ENCODE measurements at regions of chr14 and their contacts with region 1.

Region 1: DNA sequence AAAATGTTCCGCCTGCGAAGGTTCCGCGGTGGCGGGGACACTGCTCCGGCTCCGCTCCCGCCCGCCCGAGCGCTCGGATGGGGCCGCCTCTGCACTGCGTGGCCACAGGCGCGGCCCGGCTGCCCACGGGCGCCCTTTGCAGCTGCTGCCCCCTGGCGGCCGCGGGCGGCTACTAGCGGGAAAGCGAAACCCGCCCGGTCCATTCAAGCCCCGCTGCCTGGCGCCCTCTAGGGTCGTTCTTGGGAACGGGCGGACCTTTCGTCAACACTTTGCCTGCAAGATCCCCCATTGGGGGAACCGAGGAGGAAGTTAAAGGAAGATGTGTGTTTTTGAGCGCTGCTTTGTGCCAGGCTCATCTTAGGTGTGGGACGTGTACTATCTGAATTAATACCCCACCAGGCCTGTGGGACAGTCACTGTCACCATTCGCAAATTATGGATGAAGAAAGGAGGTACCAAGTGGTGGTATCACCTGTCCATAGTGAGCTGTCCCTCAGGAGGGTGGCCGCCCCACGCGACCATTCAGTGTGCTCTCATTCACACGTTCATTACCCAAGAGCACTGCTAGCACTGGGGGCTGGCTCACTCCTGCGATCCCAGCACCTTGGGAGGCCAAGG is 19.4 kb downstream of the GPR132 start:
- DNase-seq: no peak
- ATAC-seq: peak; percentile 92
- H3K4me3 ChIP-seq: peak overlapping the region in 1 of 2 experiments; percentile 33; a peak in 1 of 4 replicates
- H3K27ac ChIP-seq: no peak overlapping the region
- H3K4me1 ChIP-seq: peaks cover 5% of the 10 kb centered on the region; the same call in 1 of the 2 replicates
- H3K27me3 ChIP-seq: no peaks in the 10 kb centered on the region
- CTCF ChIP-seq: peak; percentile 99

Region 2: DNA sequence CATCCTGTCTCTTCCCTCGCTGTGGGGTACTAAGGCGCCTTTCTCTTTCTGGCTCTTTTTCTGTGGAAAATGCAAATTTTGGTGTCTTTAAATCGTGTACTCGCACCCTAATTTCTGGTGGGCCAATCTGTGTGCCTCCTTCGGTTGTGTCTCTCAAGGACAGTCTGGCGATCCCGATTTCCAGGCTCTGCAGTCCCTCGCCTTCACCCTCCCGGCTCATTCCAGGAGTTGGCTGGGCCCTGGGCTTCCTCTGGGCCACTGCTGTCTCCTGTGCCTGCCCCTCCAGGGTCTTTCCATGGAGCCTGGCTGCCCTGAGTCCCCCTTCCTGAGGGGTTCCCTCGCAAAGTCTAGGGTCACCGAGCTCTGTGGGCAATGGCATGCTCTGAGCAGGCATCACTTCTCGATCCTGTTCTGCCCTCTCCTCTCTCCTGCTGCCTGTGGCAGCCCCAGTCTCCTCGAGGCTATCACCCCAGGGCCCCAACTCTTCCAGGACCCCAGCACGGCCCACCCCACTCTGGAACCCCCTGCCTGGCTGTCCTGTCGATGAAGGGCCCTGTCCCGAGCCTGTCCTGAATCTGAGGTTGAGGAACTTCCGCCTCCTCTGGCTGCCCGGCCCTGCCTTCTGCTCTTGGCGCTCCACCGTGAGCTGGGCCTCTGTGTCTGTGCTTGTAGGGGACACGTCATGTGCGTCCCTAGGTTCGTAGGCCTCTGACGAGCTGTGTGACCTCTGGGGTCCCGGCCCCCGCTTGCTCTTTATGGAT is 91.7 kb before region 1 on chr14:
- CTCF ChIA-PET with region 1: no interaction called
- POLR2A ChIA-PET with region 1: no interaction called
- in situ Hi-C with region 1: no loop called
- intact Hi-C with region 1: no loop called
- DNase-seq: no peak
- ATAC-seq: no peak
- H3K4me3 ChIP-seq: no peak overlapping the region
- H3K27ac ChIP-seq: no peak overlapping the region
- H3K4me1 ChIP-seq: no peaks in the 10 kb centered on the region
- H3K27me3 ChIP-seq: no peaks in the 10 kb centered on the region
- CTCF ChIP-seq: no peak

Region 3: DNA sequence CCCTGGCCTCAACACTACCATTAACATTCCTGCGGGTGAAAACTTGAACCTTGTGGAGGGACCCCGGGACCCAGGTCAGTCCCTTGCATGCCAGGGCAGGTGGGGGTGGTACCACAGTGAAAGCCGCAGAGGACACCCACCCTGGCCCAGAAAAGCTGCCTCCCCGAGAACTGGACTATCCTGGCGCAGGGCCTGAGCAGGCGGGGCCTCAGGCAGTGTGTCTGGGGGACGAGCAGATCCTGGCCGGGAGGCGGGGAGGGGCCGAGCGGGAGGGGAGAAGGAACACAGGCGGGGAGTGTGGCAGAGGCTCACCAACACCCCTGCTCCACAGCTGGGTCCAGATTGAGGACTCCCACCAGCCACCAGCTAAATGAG is 77.7 kb before region 1 on chr14:
- CTCF ChIA-PET with region 1: interaction called, 12 read pairs
- POLR2A ChIA-PET with region 1: no interaction called
- in situ Hi-C with region 1: no loop called
- intact Hi-C with region 1: loop called (anchors 5 kb)
- DNase-seq: no peak
- ATAC-seq: peak; percentile 46
- H3K4me3 ChIP-seq: peak overlapping the region; percentile 65 to 77
- H3K27ac ChIP-seq: peak overlapping the region; percentile 93
- H3K4me1 ChIP-seq: peaks cover 50% of the 10 kb centered on the region
- H3K27me3 ChIP-seq: no peaks in the 10 kb centered on the region
- CTCF ChIP-seq: no peak

Region 4: DNA sequence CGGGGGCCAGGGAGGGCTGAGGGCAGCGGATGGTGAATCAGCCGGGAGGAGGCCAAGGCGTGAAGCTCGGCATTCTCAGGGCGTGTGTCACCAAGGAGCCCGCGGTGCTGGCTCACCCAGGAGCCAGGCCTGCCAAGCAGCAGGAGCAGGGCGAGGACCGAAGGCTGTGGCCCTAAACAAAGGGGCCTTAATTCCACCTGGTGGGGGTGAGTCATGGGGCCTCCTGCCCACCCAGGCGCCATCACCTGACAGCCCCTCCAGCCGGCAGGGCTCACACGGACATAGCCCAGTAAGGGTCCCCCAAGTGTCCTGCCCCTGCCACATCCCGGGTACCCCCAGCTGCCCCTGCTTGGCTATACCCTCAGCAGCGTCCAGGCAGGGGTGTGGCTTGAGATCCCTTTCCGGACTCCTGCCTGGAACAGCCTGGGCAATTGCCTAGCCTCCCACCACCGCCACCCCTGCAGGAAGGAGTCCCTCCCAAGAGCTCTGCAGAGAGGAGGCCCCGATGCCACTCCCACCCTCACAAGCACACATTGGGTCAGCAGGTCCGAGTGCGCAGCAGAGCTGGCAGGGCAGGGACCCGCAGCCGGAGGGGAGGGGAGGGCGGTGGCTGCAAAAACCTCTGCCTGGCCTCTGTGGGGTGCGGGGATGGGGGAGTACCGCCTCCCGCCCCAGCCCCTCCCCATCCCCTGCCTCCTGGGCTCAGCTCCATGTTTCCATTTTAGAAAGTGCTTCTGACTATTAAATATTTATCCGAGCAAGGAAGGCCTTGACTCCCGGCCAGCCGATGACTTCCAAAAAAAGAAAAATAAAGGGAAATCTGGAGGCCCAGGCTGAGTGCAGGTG is 72.3 kb before region 1 on chr14:
- CTCF ChIA-PET with region 1: interaction called, 18 read pairs
- POLR2A ChIA-PET with region 1: no interaction called
- in situ Hi-C with region 1: no loop called
- intact Hi-C with region 1: loop called (anchors 5 kb)
- DNase-seq: peak; percentile 89
- ATAC-seq: peak; percentile 54
- H3K4me3 ChIP-seq: peak overlapping the region in 1 of 2 experiments; percentile 35; a peak in 2 of 4 replicates
- H3K27ac ChIP-seq: peak overlapping the region; percentile 93
- H3K4me1 ChIP-seq: peaks cover 54% of the 10 kb centered on the region
- H3K27me3 ChIP-seq: no peaks in the 10 kb centered on the region
- CTCF ChIP-seq: no peak

Region 5: GRCh38 chr14:105012171-105012985 is 33.4 kb before region 1 on chr14:
- CTCF ChIA-PET with region 1: interaction called, 6 read pairs
- POLR2A ChIA-PET with region 1: no interaction called
- in situ Hi-C with region 1: no loop called
- intact Hi-C with region 1: loop called (anchors 2 kb)
- DNase-seq: no peak
- ATAC-seq: peak; percentile 76
- H3K4me3 ChIP-seq: no peak overlapping the region
- H3K27ac ChIP-seq: peak overlapping the region; percentile 61
- H3K4me1 ChIP-seq: peaks cover 50% of the 10 kb centered on the region
- H3K27me3 ChIP-seq: no peaks in the 10 kb centered on the region
- CTCF ChIP-seq: peak; percentile 86

Measured in Panc1 (cell line).